ENCODE measurements at regions of chr11 and their contacts with region 1.

Region 1: GRCh38 chr11:118689851-118690552 is 10.6 kb upstream of the TREH start:
- DNase-seq: peak; percentile 94
- ATAC-seq: peak; percentile 92
- H3K4me3 Mint-ChIP-seq: peak overlapping the region; percentile 73
- H3K27ac Mint-ChIP-seq: peak overlapping the region; percentile 86
- H3K4me1 Mint-ChIP-seq: peaks cover 52% of the 10 kb centered on the region
- H3K27me3 Mint-ChIP-seq: peaks cover 4% of the 10 kb centered on the region
- CTCF ChIP-seq: peak; percentile 99

Region 2: DNA sequence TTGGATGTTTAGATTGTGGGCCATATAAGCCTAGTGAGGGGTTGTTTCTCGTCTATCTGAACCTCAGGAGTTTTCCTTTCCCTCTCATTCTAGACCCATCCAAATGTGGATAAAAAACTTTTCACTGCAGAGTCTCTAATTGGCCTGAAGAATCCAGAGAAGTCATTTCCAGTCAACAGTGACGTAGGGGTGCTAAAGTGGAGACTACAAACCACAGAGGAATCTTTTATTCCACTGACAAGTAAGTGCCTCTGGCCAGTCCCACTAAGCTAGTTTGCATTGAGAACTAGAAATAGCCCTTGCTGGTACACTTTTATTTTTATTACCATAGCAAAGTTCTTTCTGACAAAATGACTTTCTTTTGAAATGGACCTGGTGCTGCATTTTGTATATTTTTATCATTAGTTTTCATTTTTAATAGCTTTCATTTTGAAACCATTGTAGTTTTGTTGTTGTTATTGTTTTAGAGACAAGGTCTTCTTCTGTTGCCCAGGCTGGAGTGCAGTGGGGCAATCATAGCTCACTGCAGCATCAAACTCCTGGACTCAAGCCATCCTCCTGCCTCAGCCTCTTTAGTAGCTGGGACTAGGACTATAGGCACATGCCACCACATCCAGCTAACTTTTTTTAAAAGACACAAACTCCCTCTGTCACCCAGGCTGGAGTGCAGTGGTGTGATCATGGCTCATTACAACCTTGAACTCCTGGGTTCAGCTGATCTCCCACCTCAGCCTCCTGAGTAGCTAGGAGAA is 97.2 kb before region 1 on chr11:
- CTCF ChIA-PET with region 1: interaction called, 10 read pairs
- POLR2A ChIA-PET with region 1: no interaction called
- intact Hi-C with region 1: no loop called
- DNase-seq: no peak
- ATAC-seq: no peak
- H3K4me3 Mint-ChIP-seq: no peak overlapping the region
- H3K27ac Mint-ChIP-seq: no peak overlapping the region
- H3K4me1 Mint-ChIP-seq: peaks cover 18% of the 10 kb centered on the region
- H3K27me3 Mint-ChIP-seq: no peaks in the 10 kb centered on the region
- CTCF ChIP-seq: no peak

Region 3: GRCh38 chr11:118679483-118679882 is 10.5 kb before region 1 on chr11 and contains the start of gene TREH:
- CTCF ChIA-PET with region 1: interaction called, 13 read pairs
- POLR2A ChIA-PET with region 1: no interaction called
- intact Hi-C with region 1: no loop called
- DNase-seq: no peak
- ATAC-seq: no peak
- H3K4me3 Mint-ChIP-seq: no peak within 1 kb of the TSS
- H3K27ac Mint-ChIP-seq: no peak within 1 kb of the TSS
- H3K4me1 Mint-ChIP-seq: no peaks in the 10 kb centered on the region
- H3K27me3 Mint-ChIP-seq: no peaks in the 10 kb centered on the region
- CTCF ChIP-seq: no peak
- total RNA-seq, gene TREH: not detected

Region 4: DNA sequence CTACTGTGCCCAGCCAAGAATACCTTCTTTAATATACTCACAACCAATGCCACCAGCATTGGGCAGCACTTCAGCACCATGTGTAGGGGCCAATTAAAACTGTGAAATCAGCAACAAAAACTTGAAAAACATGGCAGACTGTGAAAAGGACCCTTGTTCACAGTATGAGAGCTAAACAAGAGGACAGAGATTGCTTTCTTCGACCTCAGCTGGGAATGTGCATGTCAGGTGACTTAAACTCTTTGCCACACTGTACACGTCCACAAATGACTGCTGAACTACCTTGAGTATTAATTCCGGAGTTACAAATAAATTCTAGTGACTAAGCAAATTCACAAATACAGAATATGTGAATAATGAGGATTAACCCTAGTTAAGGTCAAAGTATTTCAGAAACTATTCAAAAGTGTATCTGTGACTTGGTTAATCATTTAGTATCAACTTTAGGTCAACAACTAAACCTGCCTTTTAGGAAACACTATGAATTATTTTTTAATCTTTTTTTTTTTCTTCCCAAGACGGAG is 67.9 kb after region 1 on chr11:
- CTCF ChIA-PET with region 1: interaction called, 12 read pairs
- POLR2A ChIA-PET with region 1: interaction called, 3 read pairs
- intact Hi-C with region 1: no loop called
- DNase-seq: no peak
- ATAC-seq: no peak
- H3K4me3 Mint-ChIP-seq: no peak overlapping the region
- H3K27ac Mint-ChIP-seq: peak overlapping the region; percentile 62
- H3K4me1 Mint-ChIP-seq: peaks cover 4% of the 10 kb centered on the region
- H3K27me3 Mint-ChIP-seq: no peaks in the 10 kb centered on the region
- CTCF ChIP-seq: no peak

Region 5: GRCh38 chr11:118870396-118871345 is 180.7 kb after region 1 on chr11:
- CTCF ChIA-PET with region 1: interaction called, 13 read pairs
- POLR2A ChIA-PET with region 1: interaction called, 3 read pairs
- intact Hi-C with region 1: no loop called
- DNase-seq: peak; percentile 58
- ATAC-seq: peak; percentile 47
- H3K4me3 Mint-ChIP-seq: peak overlapping the region; percentile 80
- H3K27ac Mint-ChIP-seq: peak overlapping the region; percentile 99
- H3K4me1 Mint-ChIP-seq: peaks cover 58% of the 10 kb centered on the region
- H3K27me3 Mint-ChIP-seq: no peaks in the 10 kb centered on the region
- CTCF ChIP-seq: no peak

Region 6: DNA sequence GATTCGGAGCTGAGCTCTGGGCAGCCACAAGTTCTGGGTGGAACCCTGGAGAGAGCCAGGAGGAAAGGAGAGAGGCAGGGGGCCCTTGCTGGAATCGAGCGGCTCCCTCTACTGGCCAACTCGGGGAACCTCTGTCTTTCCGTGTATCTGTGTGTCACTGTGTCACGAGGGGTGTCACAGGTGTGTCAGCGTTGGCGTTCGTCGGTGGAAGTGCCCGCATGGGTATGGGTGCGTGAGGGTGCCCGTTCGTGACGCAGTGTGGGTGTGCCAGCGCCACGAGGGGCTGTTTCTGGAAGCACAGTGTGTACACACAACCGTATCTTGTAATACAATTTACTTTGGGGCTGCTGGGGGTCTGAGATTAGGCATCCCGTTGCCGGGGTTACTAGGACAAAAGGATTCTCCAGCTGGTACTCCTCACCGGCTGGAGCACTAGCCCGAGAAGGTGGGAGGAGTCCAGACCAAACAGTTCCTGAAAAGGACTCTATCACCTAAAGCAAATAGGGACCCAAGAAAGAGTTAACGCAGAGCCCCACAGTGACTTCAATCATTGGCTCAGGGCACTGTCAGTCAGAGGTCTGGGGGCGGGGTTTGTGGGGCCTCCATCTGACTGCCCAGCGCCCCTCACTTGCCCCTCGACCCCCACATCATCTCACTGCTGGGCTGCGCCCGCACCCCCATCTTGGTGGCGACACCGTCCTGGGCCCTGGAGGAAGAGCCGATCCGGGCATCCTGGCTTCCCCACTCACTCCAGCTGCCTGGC is 238.3 kb after region 1 on chr11:
- CTCF ChIA-PET with region 1: interaction called, 15 read pairs
- POLR2A ChIA-PET with region 1: interaction called, 3 read pairs
- intact Hi-C with region 1: no loop called
- DNase-seq: peak; percentile 94
- ATAC-seq: peak; percentile 54
- H3K4me3 Mint-ChIP-seq: peak overlapping the region; percentile 90
- H3K27ac Mint-ChIP-seq: peak overlapping the region; percentile 98
- H3K4me1 Mint-ChIP-seq: peaks cover 46% of the 10 kb centered on the region
- H3K27me3 Mint-ChIP-seq: no peaks in the 10 kb centered on the region
- CTCF ChIP-seq: peak; percentile 94

Measured in activated CD8-positive, alpha-beta T cell treated with anti-CD3 and anti-CD28 coated beads for 36 hours (primary cell).